ENCODE measurements at regions of chr12 and their contacts with region 1.

Region 1: DNA sequence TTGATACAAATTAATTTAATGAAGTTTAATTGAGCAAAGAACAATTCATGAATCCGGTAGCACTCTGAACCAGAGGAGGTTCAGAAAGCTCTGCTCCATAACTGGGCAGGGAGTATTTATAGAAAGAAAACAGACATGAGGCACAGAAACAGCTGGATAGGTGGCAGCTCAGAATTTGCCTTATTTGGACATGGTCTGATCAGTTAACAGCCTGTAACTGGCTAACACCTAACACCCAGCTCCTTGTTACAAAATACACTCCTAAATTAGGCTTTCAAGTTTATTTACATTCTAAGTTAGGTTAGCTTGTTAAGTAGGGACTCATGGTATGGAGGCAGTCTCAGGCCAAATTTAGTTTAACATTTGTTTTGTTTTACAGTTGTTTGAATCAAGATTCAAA is 67.8 kb upstream of the TMCC3 start:
- DNase-seq: peak; percentile 60
- H3K4me3 ChIP-seq: no peak overlapping the region
- H3K27ac ChIP-seq: peak overlapping the region; percentile 51
- H3K4me1 ChIP-seq: peaks cover 26% of the 10 kb centered on the region
- H3K27me3 ChIP-seq: no peaks in the 10 kb centered on the region
- CTCF ChIP-seq: no peak
- POLR2A ChIP-seq: no peak

Region 2: DNA sequence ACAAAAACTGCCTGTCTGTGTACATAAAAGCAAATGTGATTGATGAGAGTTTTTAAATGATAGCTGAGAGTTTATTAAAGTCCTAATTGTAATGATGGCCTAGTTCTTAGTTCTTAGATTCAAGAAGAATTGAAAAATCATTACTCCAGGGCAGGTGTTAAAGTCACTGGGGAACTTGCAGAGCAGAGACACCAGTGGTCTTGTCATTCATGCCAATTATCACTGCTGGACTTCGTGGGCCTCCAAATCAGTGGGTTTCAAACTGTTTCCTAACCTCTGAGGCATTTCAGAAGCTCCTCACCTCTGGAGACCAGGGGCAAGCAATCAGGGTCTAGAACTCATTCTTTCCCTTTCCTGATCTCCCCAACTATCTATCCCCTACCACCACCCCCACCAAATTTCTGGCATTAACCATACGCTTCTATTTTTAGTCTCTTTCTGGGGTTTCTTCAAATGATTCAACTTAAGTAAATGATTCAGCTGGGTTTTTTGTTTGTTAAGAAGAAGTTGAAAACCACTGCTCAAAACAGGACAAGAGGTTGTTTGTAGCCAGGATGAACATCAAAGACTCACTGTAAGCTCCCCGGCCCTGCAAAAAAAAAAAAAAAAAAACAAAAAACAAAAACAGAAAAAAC is 338.5 kb before region 1 on chr12:
- CTCF ChIA-PET with region 1: no interaction called
- POLR2A ChIA-PET with region 1: no interaction called
- dilution Hi-C with region 1: no loop called
- intact Hi-C with region 1: no loop called
- DNase-seq: no peak
- H3K4me3 ChIP-seq: no peak overlapping the region
- H3K27ac ChIP-seq: no peak overlapping the region
- H3K4me1 ChIP-seq: no peaks in the 10 kb centered on the region
- H3K27me3 ChIP-seq: no peaks in the 10 kb centered on the region
- CTCF ChIP-seq: no peak
- POLR2A ChIP-seq: no peak

Region 3: DNA sequence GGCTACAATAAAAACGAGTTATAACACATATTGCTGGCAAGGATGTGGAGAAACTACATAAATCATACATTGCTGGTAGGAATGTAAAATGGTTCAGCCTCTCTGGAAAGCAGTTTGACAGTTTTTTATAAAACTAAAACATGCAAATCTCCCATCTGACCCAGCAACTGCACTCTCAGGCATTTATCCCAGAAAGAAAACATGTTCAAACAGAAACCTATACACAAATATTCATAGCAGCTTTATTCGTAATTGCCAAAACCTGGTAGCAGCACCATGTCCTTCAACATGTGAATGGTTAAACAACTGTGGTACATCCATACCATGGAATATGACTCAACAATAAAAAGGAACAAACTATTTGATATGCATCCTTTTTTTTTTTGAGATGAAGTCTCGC is 57.7 kb before region 1 on chr12:
- CTCF ChIA-PET with region 1: no interaction called
- POLR2A ChIA-PET with region 1: no interaction called
- dilution Hi-C with region 1: no loop called
- intact Hi-C with region 1: no loop called
- DNase-seq: no peak
- H3K4me3 ChIP-seq: no peak overlapping the region
- H3K27ac ChIP-seq: no peak overlapping the region
- H3K4me1 ChIP-seq: no peaks in the 10 kb centered on the region
- H3K27me3 ChIP-seq: no peaks in the 10 kb centered on the region
- CTCF ChIP-seq: no peak
- POLR2A ChIP-seq: no peak

Region 4: GRCh38 chr12:94704452-94705306 is 13.4 kb before region 1 on chr12:
- CTCF ChIA-PET with region 1: interaction called, 22 read pairs
- POLR2A ChIA-PET with region 1: interaction called, 3 read pairs
- dilution Hi-C with region 1: no loop called
- intact Hi-C with region 1: loop called (anchors 1 kb)
- DNase-seq: peak; percentile 96
- H3K4me3 ChIP-seq: no peak overlapping the region
- H3K27ac ChIP-seq: peak overlapping the region; percentile 48
- H3K4me1 ChIP-seq: peaks cover 25% of the 10 kb centered on the region
- H3K27me3 ChIP-seq: no peaks in the 10 kb centered on the region
- CTCF ChIP-seq: no peak
- POLR2A ChIP-seq: no peak